Cardiac septum (tissue), 1 donor: ENCODE measurements at regions of chr7 and their contacts with region 1.

Region 1: GRCh38 chr7:100081535-100082102 is at the start of gene ZNF3:
- DNase-seq: peak; percentile 99
- total RNA-seq, gene ZNF3: 14.5 TPM

Region 2: GRCh38 chr7:99918959-99919813 is 162.4 kb before region 1 on chr7 and contains the start of gene TRIM4:
- intact Hi-C with region 1: loop called (anchors 10 kb)
- DNase-seq: peak; percentile 94
- total RNA-seq, gene TRIM4: 7.8 TPM